IMR-90 (cell line): ENCODE measurements at regions of chr17 and their contacts with region 1.

Region 1: GRCh38 chr17:41959336-41960095 is 7.1 kb upstream of the CNP start:
- DNase-seq: peak; percentile 66
- ATAC-seq: peak; percentile 75
- H3K4me3 ChIP-seq: no peak overlapping the region
- H3K27ac ChIP-seq: no peak overlapping the region
- H3K4me1 ChIP-seq: peaks cover 12% of the 10 kb centered on the region
- H3K27me3 ChIP-seq: no peaks in the 10 kb centered on the region
- CTCF ChIP-seq: peak; percentile 56
- POLR2A ChIP-seq: no peak
- RAD21 ChIP-seq: peak; percentile 61

Region 2: DNA sequence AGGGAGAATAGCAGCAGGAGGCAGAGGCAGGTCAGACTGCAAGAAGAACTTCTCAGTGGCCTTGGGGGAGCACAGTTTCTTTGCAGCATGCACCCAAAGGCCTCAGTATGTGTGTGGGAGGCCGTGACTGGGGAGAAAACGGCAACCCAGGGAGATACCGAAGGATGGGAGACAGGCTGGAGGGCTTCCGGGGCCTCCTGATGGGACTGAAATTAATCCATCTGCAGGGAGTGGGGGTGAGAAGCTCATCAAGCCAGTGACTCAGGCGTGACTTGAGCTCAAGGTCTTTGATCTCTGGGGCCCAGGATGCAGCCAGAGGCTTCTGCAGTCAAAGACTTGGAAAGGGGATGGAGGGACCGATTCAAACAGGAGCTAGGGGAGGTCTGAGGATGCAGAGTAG is 96.0 kb after region 1 on chr17:
- CTCF ChIA-PET with region 1: no interaction called
- POLR2A ChIA-PET with region 1: interaction called, 12 read pairs
- dilution Hi-C with region 1: no loop called
- in situ Hi-C with region 1: no loop called
- intact Hi-C with region 1: no loop called
- DNase-seq: peak; percentile 12
- ATAC-seq: peak; percentile 35; the same call in 1 of the 2 replicates
- H3K4me3 ChIP-seq: no peak overlapping the region
- H3K27ac ChIP-seq: no peak overlapping the region
- H3K4me1 ChIP-seq: no peaks in the 10 kb centered on the region
- H3K27me3 ChIP-seq: peaks cover 77% of the 10 kb centered on the region
- CTCF ChIP-seq: no peak
- POLR2A ChIP-seq: no peak
- RAD21 ChIP-seq: no peak